Calu3 (cell line): ENCODE measurements at regions of chr12 and their contacts with region 1.

Region 1: DNA sequence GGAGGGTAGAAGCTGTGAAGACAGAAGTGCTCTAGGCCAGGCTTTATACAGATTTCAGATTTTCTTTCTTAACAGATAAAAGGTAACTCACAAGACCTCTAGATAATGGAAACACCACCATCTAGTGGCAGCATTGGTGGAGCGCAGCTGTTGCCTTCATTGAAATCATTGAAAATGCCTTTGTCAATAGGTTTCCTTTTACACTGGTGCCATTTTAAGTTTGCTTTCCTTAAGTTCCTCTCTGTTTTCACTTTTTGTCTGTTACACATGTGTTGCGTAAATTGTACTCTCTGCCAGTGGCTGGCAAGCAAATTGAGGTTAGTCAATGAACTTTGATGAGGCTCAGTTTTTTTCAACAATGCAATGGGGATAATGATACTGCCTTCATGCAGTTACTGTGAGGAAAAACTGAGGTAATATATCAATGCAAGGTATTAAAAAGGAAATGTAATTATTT is 31.1 kb downstream of the ALDH1L2 start:
- DNase-seq: peak; percentile 77
- H3K4me3 Mint-ChIP-seq: no peak overlapping the region
- H3K27ac Mint-ChIP-seq: no peak overlapping the region
- H3K4me1 Mint-ChIP-seq: no peaks in the 10 kb centered on the region
- H3K27me3 Mint-ChIP-seq: no peaks in the 10 kb centered on the region
- CTCF ChIP-seq: peak; percentile 83

Region 2: DNA sequence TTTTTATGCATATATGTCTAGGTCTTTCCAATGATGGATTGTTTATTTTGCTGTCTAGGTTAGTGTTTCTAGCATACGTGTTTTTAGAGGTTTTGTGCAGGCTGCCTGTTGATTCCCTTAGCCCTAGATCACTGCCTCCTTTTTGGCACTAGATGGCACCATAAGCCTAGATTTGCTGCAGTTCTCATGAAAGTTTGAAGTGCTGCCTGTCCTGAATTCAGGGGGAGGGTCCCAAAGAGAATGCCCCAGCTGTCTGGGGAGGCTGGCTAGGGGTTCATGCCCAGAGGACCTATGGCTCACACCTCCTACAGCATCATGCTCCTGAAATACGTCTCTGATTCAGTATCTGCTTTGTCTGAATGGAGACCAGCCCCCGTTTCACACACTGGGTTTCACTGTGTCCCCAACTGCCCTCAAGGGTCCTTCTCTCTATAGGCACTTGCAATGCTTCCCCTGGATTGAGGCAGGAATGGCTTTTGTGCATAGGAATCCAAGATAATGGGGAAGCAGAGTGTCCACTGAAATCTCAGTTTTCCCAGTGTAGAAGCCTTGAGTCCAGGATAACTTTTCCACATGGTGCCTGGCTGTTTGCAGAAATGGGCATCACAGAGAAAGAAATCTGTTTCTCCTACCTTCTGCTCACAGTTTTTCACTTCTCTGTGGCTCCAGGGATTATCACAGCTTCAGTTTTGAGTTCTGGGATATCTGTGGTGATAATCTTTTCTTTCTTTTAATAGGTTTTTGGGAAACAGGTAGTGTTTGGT is 851.7 kb before region 1 on chr12:
- CTCF ChIA-PET with region 1: no interaction called
- intact Hi-C with region 1: loop called (anchors 1 kb)
- DNase-seq: peak; percentile 48
- H3K4me3 Mint-ChIP-seq: no peak overlapping the region
- H3K27ac Mint-ChIP-seq: no peak overlapping the region
- H3K4me1 Mint-ChIP-seq: no peaks in the 10 kb centered on the region
- H3K27me3 Mint-ChIP-seq: no peaks in the 10 kb centered on the region
- CTCF ChIP-seq: peak; percentile 84

Region 3: GRCh38 chr12:104381731-104382480 is 671.2 kb before region 1 on chr12:
- CTCF ChIA-PET with region 1: interaction called, 16 read pairs
- intact Hi-C with region 1: loop called (anchors 1 kb)
- DNase-seq: peak; percentile 90
- H3K4me3 Mint-ChIP-seq: no peak overlapping the region
- H3K27ac Mint-ChIP-seq: no peak overlapping the region
- H3K4me1 Mint-ChIP-seq: peaks cover 16% of the 10 kb centered on the region
- H3K27me3 Mint-ChIP-seq: no peaks in the 10 kb centered on the region
- CTCF ChIP-seq: peak; percentile 96

Region 4: GRCh38 chr12:104680066-104680465 is 373.1 kb before region 1 on chr12:
- CTCF ChIA-PET with region 1: no interaction called
- intact Hi-C with region 1: loop called (anchors 1 kb)
- DNase-seq: no peak
- H3K4me3 Mint-ChIP-seq: no peak overlapping the region
- H3K27ac Mint-ChIP-seq: no peak overlapping the region
- H3K4me1 Mint-ChIP-seq: peaks cover 19% of the 10 kb centered on the region
- H3K27me3 Mint-ChIP-seq: no peaks in the 10 kb centered on the region
- CTCF ChIP-seq: no peak

Region 5: GRCh38 chr12:104733717-104734175 is 319.4 kb before region 1 on chr12:
- CTCF ChIA-PET with region 1: no interaction called
- intact Hi-C with region 1: loop called (anchors 5 kb)
- DNase-seq: peak; percentile 28
- H3K4me3 Mint-ChIP-seq: no peak overlapping the region
- H3K27ac Mint-ChIP-seq: no peak overlapping the region
- H3K4me1 Mint-ChIP-seq: peaks cover 7% of the 10 kb centered on the region
- H3K27me3 Mint-ChIP-seq: peaks cover 70% of the 10 kb centered on the region
- CTCF ChIP-seq: no peak

Region 6: DNA sequence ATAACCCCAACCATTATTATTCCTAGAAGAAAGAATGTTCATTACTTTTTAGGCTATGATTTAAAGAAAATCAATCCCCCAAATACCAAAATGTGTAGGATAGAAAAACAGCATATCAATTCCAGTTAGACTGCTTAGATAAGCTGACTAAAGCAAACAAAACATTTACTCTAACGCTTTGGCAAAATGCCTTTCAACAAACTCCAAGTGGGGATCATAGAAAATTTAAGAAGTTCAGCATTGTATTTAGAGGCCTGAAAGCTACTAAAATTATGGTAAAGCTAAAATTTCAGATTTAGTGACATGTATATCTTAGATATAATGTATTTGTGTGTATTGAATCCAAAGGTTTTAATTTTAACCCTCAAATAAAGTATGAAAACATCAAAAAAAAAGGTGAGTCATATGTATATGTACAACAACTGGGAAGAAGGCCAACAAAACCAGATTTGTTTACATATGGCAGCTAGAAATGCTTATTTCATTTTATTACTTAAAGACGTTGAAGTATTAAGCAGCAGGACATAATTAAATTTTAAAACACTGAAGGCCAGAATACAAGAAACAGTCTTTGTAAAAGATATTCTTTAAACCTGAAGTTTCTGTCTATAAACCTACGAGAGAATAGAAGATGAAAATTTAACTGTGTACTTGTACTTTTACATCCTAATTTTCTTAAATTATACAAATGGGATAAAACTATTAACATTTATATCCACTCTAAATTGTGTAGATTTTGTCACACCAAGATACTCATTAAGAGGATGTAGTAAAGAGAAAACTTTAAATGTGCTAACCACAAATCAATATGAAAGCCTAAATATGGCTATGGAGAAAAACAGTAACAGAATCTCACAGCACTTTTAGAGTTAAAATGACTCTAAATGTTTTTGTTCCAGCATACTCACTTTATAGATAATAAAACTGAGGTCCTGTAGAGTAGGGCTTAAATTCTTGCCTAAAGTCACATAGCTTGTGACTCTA is 166.4 kb before region 1 on chr12:
- CTCF ChIA-PET with region 1: no interaction called
- intact Hi-C with region 1: loop called (anchors 5 kb)
- DNase-seq: no peak
- H3K4me3 Mint-ChIP-seq: no peak overlapping the region
- H3K27ac Mint-ChIP-seq: no peak overlapping the region
- H3K4me1 Mint-ChIP-seq: peaks cover 10% of the 10 kb centered on the region
- H3K27me3 Mint-ChIP-seq: no peaks in the 10 kb centered on the region
- CTCF ChIP-seq: no peak

Region 7: DNA sequence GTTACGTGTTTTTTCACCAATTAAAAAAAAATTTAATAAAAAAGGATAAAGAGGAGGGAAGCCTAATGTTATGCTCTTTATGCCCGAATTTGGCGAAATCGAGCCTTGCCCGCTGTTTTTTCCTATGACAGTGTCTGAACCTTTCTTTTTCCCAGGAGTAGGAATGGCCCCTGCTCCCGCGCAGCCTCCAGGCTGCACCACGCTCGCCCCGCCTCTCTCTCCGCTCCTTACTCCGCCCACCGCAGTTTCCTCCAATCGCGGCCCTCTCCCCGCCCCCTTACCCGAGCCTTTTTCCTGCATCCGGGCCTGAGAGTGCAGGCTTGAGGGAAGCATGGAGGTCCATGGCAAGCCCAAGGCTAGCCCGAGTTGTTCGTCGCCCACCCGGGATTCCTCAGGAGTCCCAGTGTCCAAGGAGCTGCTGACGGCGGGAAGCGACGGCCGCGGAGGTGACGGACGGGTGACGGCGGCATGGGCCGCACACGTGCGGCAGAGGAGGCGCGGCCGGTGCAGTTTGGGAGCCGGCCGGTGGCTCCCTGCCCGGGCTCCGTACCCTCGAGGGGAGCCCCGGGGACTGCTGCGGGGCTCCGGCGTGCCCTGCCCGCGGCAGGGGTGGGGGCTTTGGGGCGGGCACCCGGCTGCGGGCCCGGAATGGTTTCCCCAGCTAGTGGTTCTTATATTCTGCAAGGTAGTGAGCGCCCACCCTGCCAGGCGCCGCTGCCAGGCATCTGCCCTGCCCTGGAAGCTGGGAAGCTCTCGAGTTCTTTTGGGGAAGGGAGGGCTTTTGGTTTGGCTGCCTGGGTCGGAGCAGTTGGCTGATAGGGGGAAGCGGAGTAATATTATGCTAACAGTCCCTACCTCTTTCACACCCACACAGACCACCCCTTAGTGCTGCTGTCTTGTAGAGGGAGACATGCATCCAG is 66.9 kb before region 1 on chr12 and contains the start of gene NOPCHAP1:
- CTCF ChIA-PET with region 1: no interaction called
- intact Hi-C with region 1: loop called (anchors 5 kb)
- DNase-seq: peak; percentile 97
- H3K4me3 Mint-ChIP-seq: peak within 1 kb of the TSS; percentile 72
- H3K27ac Mint-ChIP-seq: peak within 1 kb of the TSS; percentile 88
- H3K4me1 Mint-ChIP-seq: peaks cover 35% of the 10 kb centered on the region
- H3K27me3 Mint-ChIP-seq: no peaks in the 10 kb centered on the region
- CTCF ChIP-seq: no peak
- total RNA-seq, gene NOPCHAP1: 22.4 and 24.3 TPM in 2 replicates